CD14-positive monocyte (primary cell): ENCODE measurements at regions of chr2 and their contacts with region 1.

Region 1: DNA sequence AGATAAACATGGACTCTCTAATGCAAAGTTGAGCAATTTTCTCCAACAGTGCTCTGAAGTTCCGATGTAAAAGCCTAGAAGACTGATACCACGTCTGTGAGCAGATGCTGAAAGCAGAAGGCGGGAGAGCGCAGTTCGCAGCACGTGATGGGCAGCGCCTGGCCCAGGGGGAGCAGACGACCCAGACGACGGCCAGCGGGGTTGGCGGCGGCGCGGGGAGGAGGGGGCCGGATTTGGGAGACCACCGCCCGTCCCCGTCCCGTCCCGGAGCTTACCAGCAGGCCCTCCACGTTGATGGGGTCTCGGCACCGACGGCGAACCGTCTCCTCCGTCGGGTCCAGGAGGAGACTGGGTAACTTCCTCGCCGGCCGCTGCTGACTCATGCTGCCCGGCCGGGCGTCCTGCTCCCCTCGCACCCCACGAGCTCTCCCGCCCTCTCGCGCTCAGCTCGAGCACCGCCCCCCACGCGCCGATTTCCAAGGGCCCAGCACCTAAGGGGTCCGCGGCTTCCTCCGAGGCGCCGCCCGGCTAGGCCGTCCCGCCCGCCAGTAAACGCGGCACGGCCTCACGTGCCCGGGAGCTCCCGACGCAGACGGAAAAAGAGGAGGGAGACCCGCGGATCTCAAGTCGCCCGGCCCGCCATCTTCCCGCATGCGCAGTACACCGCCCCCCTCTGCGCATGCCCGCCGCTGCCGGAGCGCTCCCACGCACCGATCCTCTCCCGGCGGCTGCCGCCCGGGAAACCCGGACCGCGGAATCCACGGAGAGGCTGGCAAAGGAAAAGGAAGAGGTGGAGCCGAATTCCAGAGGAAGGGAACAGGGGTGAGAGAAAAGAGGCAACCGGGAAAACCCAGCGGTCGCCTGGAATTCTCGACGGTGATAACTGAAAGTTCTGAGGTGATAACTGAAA is at the start of gene E2F6:
- DNase-seq: peak; percentile 72 to 76 (median 73)
- H3K4me3 ChIP-seq: peak within 1 kb of the TSS; percentile 44 to 82 (median 77)
- H3K4me3 Mint-ChIP-seq: peak within 1 kb of the TSS; percentile 93 to 95
- H3K27ac ChIP-seq: peak within 1 kb of the TSS; percentile 61 to 84
- H3K27ac Mint-ChIP-seq: peak within 1 kb of the TSS; percentile 88 to 94 (median 92)
- H3K4me1 ChIP-seq: peaks cover 14 to 17% of the 10 kb centered on the region in 2 donors
- H3K4me1 Mint-ChIP-seq: peaks cover 27% of the 10 kb centered on the region
- H3K27me3 ChIP-seq: no peaks in the 10 kb centered on the region
- H3K27me3 Mint-ChIP-seq: peaks cover 1 to 2% (median 1%) of the 10 kb centered on the region in 3 donors
- CTCF ChIP-seq: no peak
- polyA plus RNA-seq, gene E2F6: 3.5 to 6.4 (median 3.7) TPM

Region 2: DNA sequence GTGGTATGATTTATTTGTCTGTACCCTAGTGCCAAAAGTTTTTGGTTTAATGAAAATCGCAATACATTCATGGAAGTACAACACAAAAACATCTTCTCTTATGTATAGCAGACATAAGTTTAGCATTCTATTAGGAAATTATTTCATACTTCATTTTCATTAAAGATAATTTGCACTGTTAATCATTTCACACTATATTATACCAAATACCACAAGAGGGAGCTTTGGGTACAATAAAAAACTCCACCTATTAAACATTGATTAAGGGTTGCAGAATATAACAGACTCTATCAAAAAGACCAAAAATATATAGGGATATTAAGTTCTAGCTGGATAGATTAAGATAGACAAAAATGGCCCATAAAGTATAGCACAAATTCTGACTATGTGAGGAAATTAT is 231.4 kb before region 1 on chr2:
- intact Hi-C with region 1: loop called in 1 of 2 experiments (anchors 10 kb)
- DNase-seq: no peak
- H3K4me3 ChIP-seq: no peak overlapping the region
- H3K4me3 Mint-ChIP-seq: no peak overlapping the region
- H3K27ac ChIP-seq: no peak overlapping the region
- H3K27ac Mint-ChIP-seq: no peak overlapping the region
- H3K4me1 ChIP-seq: no peaks in the 10 kb centered on the region
- H3K4me1 Mint-ChIP-seq: peaks cover under 1% of the 10 kb centered on the region
- H3K27me3 ChIP-seq: no peaks in the 10 kb centered on the region
- H3K27me3 Mint-ChIP-seq: no peaks in the 10 kb centered on the region
- CTCF ChIP-seq: peak; percentile 34

Region 3: DNA sequence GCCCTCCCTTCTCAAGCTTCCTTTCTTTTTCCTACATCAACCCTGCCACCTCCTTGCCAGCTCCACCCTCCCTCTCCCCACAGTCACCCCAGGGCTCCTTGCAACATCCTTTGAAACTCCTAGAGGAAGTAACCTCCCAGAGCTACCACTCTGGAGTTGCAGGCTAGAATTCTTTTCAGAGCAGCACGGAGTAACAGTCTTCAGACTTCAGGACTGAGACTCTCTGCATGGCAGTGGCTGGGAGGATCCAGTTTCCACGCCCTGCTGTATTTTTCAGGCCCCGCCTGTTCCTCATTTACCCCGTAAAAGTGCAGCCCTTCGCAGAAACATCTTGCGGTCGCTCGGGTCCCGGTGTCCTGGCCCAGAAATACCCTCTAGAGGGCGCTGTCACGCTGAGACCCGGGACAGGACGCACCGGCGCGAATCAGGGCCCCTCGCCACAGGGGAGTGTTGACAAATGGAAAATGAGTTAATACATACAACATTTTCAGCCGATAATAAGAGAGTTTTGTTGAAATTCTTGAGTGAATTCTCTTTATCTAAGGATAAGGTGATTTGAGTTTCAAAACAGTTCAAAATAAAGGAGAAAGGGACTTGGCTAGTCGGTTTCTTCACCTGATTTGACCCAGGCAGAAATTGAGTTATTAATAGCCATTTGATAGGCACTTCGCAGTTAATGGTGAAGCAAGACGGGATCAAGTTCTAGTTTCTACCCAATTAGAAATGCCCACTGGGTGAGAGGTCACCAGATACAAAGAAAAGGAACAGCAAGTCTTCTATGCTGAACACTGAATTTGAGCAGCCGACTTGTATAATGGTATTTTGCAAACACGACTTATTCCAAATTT is 222.7 kb after region 1 on chr2:
- intact Hi-C with region 1: loop called in 1 of 2 experiments (anchors 5 kb)
- DNase-seq: peak; percentile 76 to 86 (median 79)
- H3K4me3 ChIP-seq: peak overlapping the region; percentile 1 to 63 (median 21)
- H3K4me3 Mint-ChIP-seq: peak overlapping the region; percentile 75 to 89
- H3K27ac ChIP-seq: peak overlapping the region in 1 of 2 donors; percentile 45
- H3K27ac Mint-ChIP-seq: peak overlapping the region; percentile 76 to 95 (median 88)
- H3K4me1 ChIP-seq: peaks cover 29 to 34% of the 10 kb centered on the region in 2 donors
- H3K4me1 Mint-ChIP-seq: peaks cover 42% of the 10 kb centered on the region
- H3K27me3 ChIP-seq: no peaks in the 10 kb centered on the region
- H3K27me3 Mint-ChIP-seq: peaks cover 13 to 17% (median 16%) of the 10 kb centered on the region in 3 donors
- CTCF ChIP-seq: peak; percentile 93